ENCODE measurements at regions of chr1 and their contacts with region 1.

Region 1: DNA sequence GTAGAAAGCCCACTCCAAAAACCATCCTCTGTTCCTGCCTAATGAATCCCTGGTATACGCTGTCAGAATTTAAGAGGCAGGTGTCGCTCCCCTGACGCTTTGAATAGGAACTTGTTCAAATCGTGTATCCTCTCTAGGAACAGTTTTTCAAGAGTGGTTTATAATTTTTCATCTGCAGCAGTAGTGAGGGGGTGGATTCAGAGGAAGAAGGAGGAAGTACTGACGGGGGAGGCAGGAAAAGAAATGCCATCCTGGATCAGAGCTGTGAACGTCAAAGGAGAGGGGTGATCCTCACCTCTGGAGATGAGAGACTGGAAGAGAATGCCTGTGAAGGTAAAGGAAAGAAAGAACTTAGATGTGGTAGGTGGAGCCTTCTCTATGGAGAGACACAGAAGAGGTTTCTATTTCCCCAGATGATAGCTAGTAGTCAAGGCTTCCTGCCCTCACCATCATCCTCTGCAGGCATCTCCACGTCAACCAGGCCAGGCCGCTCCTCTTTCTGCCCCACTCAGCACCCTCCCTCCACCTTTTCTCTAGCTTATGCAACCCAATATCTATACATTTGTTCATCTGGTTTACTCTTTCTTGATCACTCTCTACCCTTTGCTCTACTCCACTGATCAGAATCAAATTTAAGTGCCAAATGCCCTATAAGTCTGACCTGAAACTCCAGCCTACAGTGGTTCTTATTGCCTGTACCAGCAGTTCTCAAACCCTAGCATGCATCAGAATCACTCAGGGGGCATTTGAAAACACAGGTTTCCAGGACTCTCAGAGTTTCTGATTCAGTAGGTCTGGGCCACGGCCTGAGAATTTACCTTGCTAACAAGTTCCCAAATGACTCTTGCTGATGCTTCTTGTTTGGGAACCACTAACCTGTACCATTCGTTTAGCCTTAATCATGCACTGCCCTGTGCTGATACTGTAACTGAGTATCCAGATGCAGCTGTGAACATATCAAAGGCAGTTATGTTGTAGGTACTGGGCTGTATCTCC is 13.1 kb upstream of the BCL9 start:
- DNase-seq: peak; percentile 36
- ATAC-seq: peak; percentile 71
- H3K4me3 Mint-ChIP-seq: no peak overlapping the region
- H3K27ac Mint-ChIP-seq: no peak overlapping the region
- H3K4me1 Mint-ChIP-seq: no peaks in the 10 kb centered on the region
- H3K27me3 Mint-ChIP-seq: peaks cover 2% of the 10 kb centered on the region

Region 2: GRCh38 chr1:147515046-147515869 is 13.0 kb before region 1 on chr1:
- CTCF ChIA-PET with region 1: interaction called, 15 read pairs
- POLR2A ChIA-PET with region 1: no interaction called
- DNase-seq: peak; percentile 27
- ATAC-seq: no peak
- H3K4me3 Mint-ChIP-seq: no peak overlapping the region
- H3K27ac Mint-ChIP-seq: no peak overlapping the region
- H3K4me1 Mint-ChIP-seq: peaks cover 6% of the 10 kb centered on the region
- H3K27me3 Mint-ChIP-seq: peaks cover 16% of the 10 kb centered on the region

Region 3: DNA sequence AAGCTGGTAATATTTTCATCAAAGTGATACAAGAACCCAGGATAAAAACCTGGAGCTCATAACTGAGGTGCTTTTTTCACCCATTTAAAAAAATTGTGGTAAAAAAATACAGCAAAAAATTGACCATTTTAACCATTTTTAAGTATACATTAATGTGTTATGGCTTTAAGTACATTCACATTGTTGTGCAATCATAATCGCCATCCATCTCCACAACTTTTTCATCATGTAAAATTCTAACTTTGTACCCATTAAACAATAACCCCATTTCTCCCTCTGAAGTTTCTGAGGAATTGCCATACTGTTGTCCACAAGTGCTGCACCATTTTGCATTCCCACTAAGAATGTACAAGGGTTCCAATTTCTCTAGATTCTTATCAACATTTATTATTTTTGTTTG is 105.5 kb after region 1 on chr1:
- CTCF ChIA-PET with region 1: no interaction called
- POLR2A ChIA-PET with region 1: no interaction called
- DNase-seq: no peak
- ATAC-seq: no peak
- H3K4me3 Mint-ChIP-seq: no peak overlapping the region
- H3K27ac Mint-ChIP-seq: no peak overlapping the region
- H3K4me1 Mint-ChIP-seq: peaks cover 19% of the 10 kb centered on the region
- H3K27me3 Mint-ChIP-seq: no peaks in the 10 kb centered on the region

Measured in activated CD8-positive, alpha-beta T cell treated with anti-CD3 and anti-CD28 coated beads, Interleukin-2, amount 10 ng/mL, durations not matched to agents 7 days and 5 days (primary cell).